ENCODE measurements at regions of chr13 and their contacts with region 1.

Region 1: DNA sequence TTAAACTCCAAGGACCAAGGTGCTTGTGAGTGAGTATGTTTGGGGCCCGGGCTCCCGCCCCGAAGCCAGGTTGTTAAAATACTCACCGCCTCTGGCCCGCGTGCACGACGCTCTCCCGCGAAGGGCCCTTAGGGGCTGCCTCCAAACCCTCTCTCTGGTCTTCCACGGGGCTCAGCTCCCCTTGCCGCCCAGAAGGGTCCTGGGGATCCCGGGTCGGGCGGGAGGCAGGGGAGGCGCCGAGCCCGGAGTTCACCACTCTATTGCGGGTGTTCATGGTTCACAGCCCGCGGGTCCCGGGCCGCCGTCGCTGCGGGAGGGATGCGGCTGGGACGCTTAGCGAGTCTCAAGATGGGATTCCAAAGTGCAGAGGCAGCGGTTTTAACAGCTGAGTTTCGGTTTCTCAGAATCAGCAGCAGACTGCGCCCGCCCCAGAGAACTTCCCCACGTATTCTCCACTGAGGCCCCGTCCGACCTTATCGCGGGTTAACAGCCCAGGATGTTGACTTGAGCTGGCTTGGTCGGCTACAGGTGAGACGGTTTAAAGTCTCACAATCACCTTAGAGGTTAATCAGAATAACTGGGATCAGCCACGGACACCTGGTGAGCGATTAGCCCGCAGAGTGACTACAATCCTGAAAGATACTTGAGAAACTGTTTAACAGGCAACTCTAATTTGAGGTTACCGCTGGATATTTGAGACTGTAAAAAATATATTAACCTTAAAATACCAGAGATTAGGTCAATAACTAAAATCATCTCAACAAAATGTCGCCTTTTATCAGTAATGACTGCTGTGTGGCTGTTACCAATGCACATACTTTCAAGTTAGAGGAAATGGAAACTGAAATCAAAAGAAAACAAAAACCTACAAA is at the start of gene EPSTI1:
- DNase-seq: peak; percentile 87
- ATAC-seq: peak; percentile 81
- H3K4me3 Mint-ChIP-seq: peak within 1 kb of the TSS; percentile 84
- H3K27ac Mint-ChIP-seq: peak within 1 kb of the TSS; percentile 99
- H3K4me1 Mint-ChIP-seq: peaks cover 45% of the 10 kb centered on the region
- H3K27me3 Mint-ChIP-seq: no peaks in the 10 kb centered on the region
- total RNA-seq, gene EPSTI1: 30.7 to 32.0 TPM

Region 2: GRCh38 chr13:42392716-42393572 is 599.2 kb before region 1 on chr13:
- CTCF ChIA-PET with region 1: no interaction called
- POLR2A ChIA-PET with region 1: interaction called, 3 read pairs
- intact Hi-C with region 1: loop called in 1 of 2 experiments (anchors 5 kb)
- DNase-seq: peak; percentile 46
- ATAC-seq: peak; percentile 57
- H3K4me3 Mint-ChIP-seq: peak overlapping the region; percentile 80
- H3K27ac Mint-ChIP-seq: peak overlapping the region; percentile 100
- H3K4me1 Mint-ChIP-seq: peaks cover 80% of the 10 kb centered on the region
- H3K27me3 Mint-ChIP-seq: no peaks in the 10 kb centered on the region

Region 3: DNA sequence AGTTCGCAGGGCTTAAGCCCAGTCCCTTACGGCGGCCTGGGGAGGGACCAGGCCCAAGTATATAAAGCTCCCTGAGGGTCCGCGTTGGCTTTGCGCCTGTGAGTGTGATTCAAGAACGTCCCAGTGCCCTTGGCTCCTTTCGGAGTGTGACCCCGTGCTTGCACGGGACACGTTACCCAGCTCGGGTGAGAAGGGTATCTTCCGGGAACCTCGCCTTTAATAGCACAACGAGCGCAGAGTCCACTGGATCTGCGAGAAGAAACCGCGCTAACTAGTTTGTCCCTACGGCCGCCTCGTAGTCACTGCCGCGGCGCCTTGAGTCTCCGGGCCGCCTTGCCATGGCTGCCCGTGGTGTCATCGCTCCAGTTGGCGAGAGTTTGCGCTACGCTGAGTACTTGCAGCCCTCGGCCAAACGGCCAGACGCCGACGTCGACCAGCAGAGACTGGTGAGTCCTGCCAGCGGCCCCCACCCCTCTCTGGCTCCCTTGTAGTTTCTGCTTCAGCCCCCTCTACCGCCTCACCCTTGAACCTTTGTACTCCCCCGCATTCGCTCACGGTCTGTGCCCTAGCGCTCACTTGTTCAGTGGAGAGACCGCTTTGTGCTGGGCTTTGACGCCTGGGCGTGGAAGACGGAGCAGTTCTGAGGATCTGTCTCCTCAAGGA is 31.3 kb after region 1 on chr13 and contains the start of gene DNAJC15:
- CTCF ChIA-PET with region 1: interaction called, 4 read pairs
- POLR2A ChIA-PET with region 1: interaction called, 8 read pairs
- intact Hi-C with region 1: loop called (anchors 1 kb)
- DNase-seq: peak; percentile 90
- ATAC-seq: peak; percentile 95
- H3K4me3 Mint-ChIP-seq: peak within 1 kb of the TSS; percentile 99
- H3K27ac Mint-ChIP-seq: peak within 1 kb of the TSS; percentile 91
- H3K4me1 Mint-ChIP-seq: peaks cover 28% of the 10 kb centered on the region
- H3K27me3 Mint-ChIP-seq: no peaks in the 10 kb centered on the region
- total RNA-seq, gene DNAJC15: 13.0 to 20.8 TPM

Region 4: DNA sequence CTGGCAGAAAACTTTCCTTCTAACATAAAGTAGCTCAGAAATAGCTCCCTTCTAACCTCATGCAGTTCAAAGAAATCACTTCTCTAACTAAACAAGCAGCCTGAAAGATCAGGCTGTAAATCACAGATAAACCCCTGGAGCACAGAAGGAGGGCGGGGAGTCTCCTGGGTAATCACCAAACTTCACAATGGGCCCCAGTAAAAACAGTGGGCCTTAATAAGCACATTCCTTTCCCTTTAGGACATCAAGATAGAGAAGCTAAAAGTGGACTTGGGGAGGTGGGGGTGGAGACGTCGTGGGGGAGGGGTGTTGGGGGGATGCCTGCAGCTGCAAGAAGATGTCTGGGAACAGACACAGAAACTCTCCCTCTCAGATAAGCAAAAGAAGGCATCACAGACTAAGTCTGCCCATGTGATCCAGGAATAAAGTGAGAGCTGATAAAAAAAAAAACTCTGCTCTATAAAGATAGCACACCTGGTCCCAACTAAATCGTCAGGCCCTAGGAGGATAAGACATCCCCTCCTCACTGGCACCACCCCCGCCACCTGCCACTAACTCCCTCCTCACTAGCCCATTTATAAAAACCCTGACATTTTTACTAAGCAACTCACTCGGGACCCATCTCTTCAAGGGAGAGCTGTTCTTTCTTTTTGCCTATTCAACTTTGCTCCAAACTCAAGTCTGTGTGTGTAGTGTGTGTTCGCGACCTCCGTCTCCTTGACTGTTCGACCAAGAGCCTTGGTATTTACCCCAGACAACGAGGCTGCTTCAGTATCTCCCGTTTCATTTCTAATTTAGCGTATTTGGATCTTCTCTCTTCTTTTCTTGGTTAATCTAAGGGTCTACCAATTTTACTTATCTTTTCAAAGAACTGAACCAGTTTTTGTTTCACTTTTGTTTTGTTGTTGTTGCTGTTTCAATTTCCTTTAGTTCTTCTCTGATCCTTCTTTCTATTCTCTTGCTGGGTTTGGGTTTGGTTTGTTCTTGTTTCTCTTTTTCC is 63.0 kb after region 1 on chr13:
- CTCF ChIA-PET with region 1: no interaction called
- POLR2A ChIA-PET with region 1: no interaction called
- intact Hi-C with region 1: loop called (anchors 2 kb)
- DNase-seq: peak; percentile 36
- ATAC-seq: peak; percentile 47
- H3K4me3 Mint-ChIP-seq: no peak overlapping the region
- H3K27ac Mint-ChIP-seq: no peak overlapping the region
- H3K4me1 Mint-ChIP-seq: peaks cover 36% of the 10 kb centered on the region
- H3K27me3 Mint-ChIP-seq: no peaks in the 10 kb centered on the region

Region 5: GRCh38 chr13:43094901-43095300 is 102.8 kb after region 1 on chr13:
- CTCF ChIA-PET with region 1: interaction called, 3 read pairs
- POLR2A ChIA-PET with region 1: interaction called, 5 read pairs
- intact Hi-C with region 1: loop called in 1 of 2 experiments (anchors 2 kb)
- DNase-seq: no peak
- ATAC-seq: peak; percentile 93
- H3K4me3 Mint-ChIP-seq: no peak overlapping the region
- H3K27ac Mint-ChIP-seq: peak overlapping the region; percentile 64
- H3K4me1 Mint-ChIP-seq: peaks cover 24% of the 10 kb centered on the region
- H3K27me3 Mint-ChIP-seq: no peaks in the 10 kb centered on the region

Region 6: DNA sequence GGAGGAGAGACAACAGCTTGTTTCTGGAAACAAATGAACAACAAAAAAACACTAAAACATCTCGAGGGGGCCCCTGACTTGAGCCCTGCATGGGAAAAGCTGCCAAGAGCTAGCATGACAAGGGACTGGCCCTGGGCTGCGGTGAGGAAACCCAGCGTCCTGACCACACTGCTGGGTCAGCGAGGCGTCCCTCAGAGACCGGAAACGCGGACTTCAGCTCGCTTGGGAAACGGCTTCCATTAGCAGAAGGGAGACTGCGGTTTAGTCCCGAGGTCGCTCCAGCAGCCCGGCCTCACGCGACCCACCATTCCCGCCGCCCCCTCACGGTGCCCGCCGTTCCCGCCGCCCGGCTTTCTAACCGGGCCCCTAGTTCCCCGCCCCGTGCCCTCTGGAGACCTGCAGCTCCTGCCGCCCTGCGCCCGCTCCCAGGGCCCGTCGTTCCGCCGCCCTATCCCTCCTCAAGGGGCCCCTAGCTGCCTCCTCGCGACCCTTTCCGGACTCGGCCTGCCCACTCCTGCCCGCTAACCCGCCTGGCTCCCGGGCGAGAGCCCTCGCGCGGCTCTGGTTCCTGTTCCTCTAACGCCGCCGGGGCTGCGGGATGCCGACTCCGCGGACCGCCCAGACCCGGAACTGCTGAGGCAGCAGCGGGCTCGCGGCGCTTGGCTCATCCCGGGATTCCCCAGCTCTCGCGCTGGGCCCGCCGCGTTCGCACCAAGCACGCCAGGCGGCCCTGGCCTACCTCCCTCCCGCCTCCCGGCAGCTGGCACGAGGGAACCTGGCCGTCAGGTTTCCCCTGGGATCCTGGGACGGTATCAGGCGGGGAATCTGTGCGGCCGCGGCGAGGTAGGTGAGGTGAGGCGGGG is 887.0 kb after region 1 on chr13 and contains the start of gene CCDC122:
- CTCF ChIA-PET with region 1: no interaction called
- POLR2A ChIA-PET with region 1: no interaction called
- intact Hi-C with region 1: no loop called
- DNase-seq: peak; percentile 89
- ATAC-seq: peak; percentile 94
- H3K4me3 Mint-ChIP-seq: peak within 1 kb of the TSS; percentile 79
- H3K27ac Mint-ChIP-seq: peak within 1 kb of the TSS; percentile 82
- H3K4me1 Mint-ChIP-seq: peaks cover 22% of the 10 kb centered on the region
- H3K27me3 Mint-ChIP-seq: peaks cover 13% of the 10 kb centered on the region
- total RNA-seq, gene CCDC122: 2.0 to 3.1 TPM

Measured in activated CD4-positive, alpha-beta T cell treated with anti-CD3 and anti-CD28 coated beads for 36 hours (primary cell).